Activated naive CD8-positive, alpha-beta T cell treated with anti-CD3 and anti-CD28 coated beads, Interleukin-2, amount 10 ng/mL, durations not matched to agents 7 days and 5 days (primary cell): ENCODE measurements at regions of chr1 and their contacts with region 1.

Region 1: GRCh38 chr1:172638885-172639831 is 19.7 kb upstream of the FASLG start:
- DNase-seq: peak; percentile 77
- ATAC-seq: peak; percentile 75
- H3K4me3 Mint-ChIP-seq: peak overlapping the region; percentile 76
- H3K27ac Mint-ChIP-seq: peak overlapping the region; percentile 97
- H3K4me1 Mint-ChIP-seq: peaks cover 71% of the 10 kb centered on the region
- H3K27me3 Mint-ChIP-seq: no peaks in the 10 kb centered on the region

Region 2: GRCh38 chr1:172515927-172516326 is 123.2 kb before region 1 on chr1:
- POLR2A ChIA-PET with region 1: no interaction called
- DNase-seq: no peak
- ATAC-seq: no peak
- H3K4me3 Mint-ChIP-seq: no peak overlapping the region
- H3K27ac Mint-ChIP-seq: no peak overlapping the region
- H3K4me1 Mint-ChIP-seq: no peaks in the 10 kb centered on the region
- H3K27me3 Mint-ChIP-seq: peaks cover 13% of the 10 kb centered on the region

Region 3: DNA sequence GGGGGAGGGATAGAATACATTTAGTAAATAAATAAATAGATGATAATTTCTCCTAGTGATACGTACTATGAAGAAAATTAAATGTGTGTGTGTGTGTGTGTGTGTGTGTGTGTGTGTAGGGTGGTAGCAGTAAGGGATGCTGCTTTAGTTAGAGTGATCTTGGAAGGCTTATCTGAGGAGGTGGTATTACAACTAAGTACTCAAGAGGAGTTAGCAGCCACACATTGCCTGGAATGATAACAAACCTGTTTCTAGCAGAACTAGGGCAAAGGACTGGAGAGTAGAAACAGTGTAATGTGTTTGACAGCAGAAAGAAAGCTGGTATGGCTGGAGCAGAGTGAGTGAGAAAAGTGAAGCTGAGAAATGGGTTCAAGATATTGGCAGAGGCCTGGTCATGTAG is 38.5 kb before region 1 on chr1:
- POLR2A ChIA-PET with region 1: no interaction called
- DNase-seq: no peak
- ATAC-seq: no peak
- H3K4me3 Mint-ChIP-seq: no peak overlapping the region
- H3K27ac Mint-ChIP-seq: no peak overlapping the region
- H3K4me1 Mint-ChIP-seq: peaks cover 9% of the 10 kb centered on the region
- H3K27me3 Mint-ChIP-seq: no peaks in the 10 kb centered on the region

Region 4: GRCh38 chr1:172627702-172628101 is 11.5 kb before region 1 on chr1:
- POLR2A ChIA-PET with region 1: interaction called, 10 read pairs
- DNase-seq: no peak
- ATAC-seq: peak; percentile 89
- H3K4me3 Mint-ChIP-seq: no peak overlapping the region
- H3K27ac Mint-ChIP-seq: no peak overlapping the region
- H3K4me1 Mint-ChIP-seq: peaks cover 41% of the 10 kb centered on the region
- H3K27me3 Mint-ChIP-seq: peaks cover 3% of the 10 kb centered on the region

Region 5: DNA sequence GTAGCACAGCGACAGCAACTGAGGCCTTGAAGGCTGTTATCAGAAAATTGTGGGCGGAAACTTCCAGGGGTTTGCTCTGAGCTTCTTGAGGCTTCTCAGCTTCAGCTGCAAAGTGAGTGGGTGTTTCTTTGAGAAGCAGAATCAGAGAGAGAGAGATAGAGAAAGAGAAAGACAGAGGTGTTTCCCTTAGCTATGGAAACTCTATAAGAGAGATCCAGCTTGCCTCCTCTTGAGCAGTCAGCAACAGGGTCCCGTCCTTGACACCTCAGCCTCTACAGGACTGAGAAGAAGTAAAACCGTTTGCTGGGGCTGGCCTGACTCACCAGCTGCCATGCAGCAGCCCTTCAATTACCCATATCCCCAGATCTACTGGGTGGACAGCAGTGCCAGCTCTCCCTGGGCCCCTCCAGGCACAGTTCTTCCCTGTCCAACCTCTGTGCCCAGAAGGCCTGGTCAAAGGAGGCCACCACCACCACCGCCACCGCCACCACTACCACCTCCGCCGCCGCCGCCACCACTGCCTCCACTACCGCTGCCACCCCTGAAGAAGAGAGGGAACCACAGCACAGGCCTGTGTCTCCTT is 19.8 kb after region 1 on chr1 and contains the start of gene FASLG:
- POLR2A ChIA-PET with region 1: interaction called, 12 read pairs
- DNase-seq: peak; percentile 45
- ATAC-seq: peak; percentile 53
- H3K4me3 Mint-ChIP-seq: peak within 1 kb of the TSS; percentile 81
- H3K27ac Mint-ChIP-seq: peak within 1 kb of the TSS; percentile 86
- H3K4me1 Mint-ChIP-seq: peaks cover 58% of the 10 kb centered on the region
- H3K27me3 Mint-ChIP-seq: peaks cover 5% of the 10 kb centered on the region
- total RNA-seq, gene FASLG: 4.5 to 4.6 TPM